ENCODE measurements at regions of chr7 and their contacts with region 1.

Region 1: GRCh38 chr7:29090836-29091601 is 55.3 kb downstream of the CPVL start:
- DNase-seq: no peak
- H3K4me3 ChIP-seq: no peak overlapping the region
- H3K27ac ChIP-seq: no peak overlapping the region
- H3K4me1 ChIP-seq: no peaks in the 10 kb centered on the region
- CTCF ChIP-seq: no peak

Region 2: DNA sequence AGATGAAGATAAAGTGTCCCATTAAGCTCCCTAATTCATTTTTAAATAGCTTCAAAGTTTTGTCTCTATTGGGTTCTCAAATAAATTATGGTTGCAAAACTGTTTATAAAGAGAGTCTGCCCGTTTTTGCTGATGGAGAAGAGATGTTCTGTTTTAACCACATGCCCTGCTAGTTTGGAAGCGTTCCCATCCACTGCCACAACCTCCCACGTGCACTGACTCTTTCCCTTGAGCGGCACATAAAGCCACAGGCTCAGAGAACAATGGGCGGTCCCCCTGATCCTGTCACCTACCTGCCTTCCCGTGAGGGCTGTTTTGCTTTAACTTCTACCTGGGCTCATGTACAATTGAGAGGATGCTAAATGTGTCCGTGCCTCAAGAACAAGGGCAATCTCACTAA is 10.2 kb before region 1 on chr7:
- CTCF ChIA-PET with region 1: interaction called, 18 read pairs
- POLR2A ChIA-PET with region 1: interaction called, 5 read pairs
- intact Hi-C with region 1: no loop called
- DNase-seq: no peak
- H3K4me3 ChIP-seq: no peak overlapping the region
- H3K27ac ChIP-seq: no peak overlapping the region
- H3K4me1 ChIP-seq: no peaks in the 10 kb centered on the region
- CTCF ChIP-seq: no peak

Measured in OCI-LY7 (cell line).